ENCODE measurements at regions of chr5 and their contacts with region 1.

Region 1: DNA sequence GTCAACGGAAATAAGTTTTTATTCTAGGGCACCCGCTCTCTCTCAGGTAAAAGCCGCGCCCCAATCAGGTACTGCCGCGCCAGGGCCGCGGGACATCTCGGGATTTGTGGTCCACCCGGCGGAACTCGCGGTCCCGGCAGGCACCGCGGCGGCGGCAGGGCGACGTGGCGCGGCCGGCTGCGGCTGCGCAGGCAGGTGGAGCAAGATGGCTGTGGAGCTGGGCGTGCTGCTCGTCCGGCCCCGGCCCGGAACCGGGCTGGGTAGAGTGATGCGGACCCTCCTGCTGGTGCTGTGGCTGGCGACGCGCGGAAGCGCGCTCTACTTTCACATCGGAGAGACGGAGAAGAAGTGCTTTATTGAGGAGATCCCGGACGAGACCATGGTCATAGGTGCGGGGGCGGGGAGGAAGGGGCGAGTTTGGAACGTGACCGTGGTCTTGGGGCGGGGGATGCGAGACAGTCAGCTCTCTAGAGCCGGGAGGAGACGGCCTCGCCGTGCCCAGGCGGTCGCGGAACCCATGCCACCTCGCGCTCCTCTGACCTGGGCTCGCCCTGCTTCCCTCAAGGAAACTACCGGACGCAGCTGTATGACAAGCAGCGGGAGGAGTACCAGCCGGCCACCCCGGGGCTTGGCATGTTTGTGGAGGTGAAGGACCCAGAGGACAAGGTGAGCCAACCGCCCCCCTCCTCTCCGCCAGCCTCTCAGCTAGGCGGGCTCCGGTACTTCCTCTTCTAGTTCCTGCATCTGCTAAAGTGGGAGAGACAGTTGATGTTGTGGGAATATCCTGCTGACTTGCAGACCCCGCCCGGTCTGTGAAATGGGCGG is at the start of gene TMED9:
- DNase-seq: peak; percentile 91
- ATAC-seq: peak; percentile 97
- H3K4me3 ChIP-seq: peak within 1 kb of the TSS; percentile 90
- H3K27ac ChIP-seq: peak within 1 kb of the TSS; percentile 33
- H3K4me1 ChIP-seq: peaks cover 14% of the 10 kb centered on the region
- H3K27me3 ChIP-seq: peaks cover 4% of the 10 kb centered on the region; the same call in 1 of the 2 replicates
- CTCF ChIP-seq: no peak
- total RNA-seq, gene TMED9: 217 and 261 TPM in 2 replicates

Region 2: DNA sequence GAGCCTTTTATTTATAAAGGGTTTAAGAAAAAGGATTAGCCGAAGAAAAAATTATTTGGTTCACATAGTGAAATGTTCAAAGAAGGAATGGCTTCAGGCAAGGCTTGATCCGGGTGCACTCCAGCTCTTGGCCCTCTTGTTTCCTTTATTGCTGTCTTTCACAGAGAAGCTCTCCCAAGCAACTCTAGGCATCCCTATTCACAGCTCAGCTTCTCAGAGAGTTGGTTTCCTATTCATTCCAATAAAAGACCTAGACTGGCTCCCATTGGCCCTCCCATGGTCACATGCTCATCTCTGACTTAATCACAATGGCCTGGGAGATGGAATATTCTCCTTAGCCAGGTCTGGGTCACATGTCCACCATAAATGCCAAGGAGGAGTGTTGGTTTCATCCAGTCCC is 514.9 kb before region 1 on chr5:
- CTCF ChIA-PET with region 1: no interaction called
- POLR2A ChIA-PET with region 1: no interaction called
- intact Hi-C with region 1: no loop called
- DNase-seq: peak; percentile 30
- ATAC-seq: peak; percentile 39
- H3K4me3 ChIP-seq: no peak overlapping the region
- H3K27ac ChIP-seq: no peak overlapping the region
- H3K4me1 ChIP-seq: no peaks in the 10 kb centered on the region
- H3K27me3 ChIP-seq: no peaks in the 10 kb centered on the region
- CTCF ChIP-seq: no peak

Region 3: GRCh38 chr5:177554474-177555111 is 37.6 kb before region 1 on chr5 and contains the start of gene FAM193B:
- CTCF ChIA-PET with region 1: no interaction called
- POLR2A ChIA-PET with region 1: no interaction called
- intact Hi-C with region 1: loop called (anchors 2 kb)
- DNase-seq: peak; percentile 91
- ATAC-seq: peak; percentile 84
- H3K4me3 ChIP-seq: peak within 1 kb of the TSS; percentile 93
- H3K27ac ChIP-seq: no peak within 1 kb of the TSS
- H3K4me1 ChIP-seq: peaks cover 21% of the 10 kb centered on the region
- H3K27me3 ChIP-seq: no peaks in the 10 kb centered on the region
- CTCF ChIP-seq: peak; percentile 34; the same call in 1 of the 2 replicates
- total RNA-seq, gene FAM193B: 33.9 and 41.1 TPM in 2 replicates

Region 4: GRCh38 chr5:177565046-177565445 is 27.2 kb before region 1 on chr5:
- CTCF ChIA-PET with region 1: no interaction called
- POLR2A ChIA-PET with region 1: no interaction called
- intact Hi-C with region 1: no loop called
- DNase-seq: no peak
- ATAC-seq: no peak
- H3K4me3 ChIP-seq: no peak overlapping the region
- H3K27ac ChIP-seq: no peak overlapping the region
- H3K4me1 ChIP-seq: no peaks in the 10 kb centered on the region
- H3K27me3 ChIP-seq: no peaks in the 10 kb centered on the region
- CTCF ChIP-seq: no peak